MCF 10A (cell line): ENCODE measurements at regions of chr6 and their contacts with region 1.

Region 1: GRCh38 chr6:63685446-63686379 is 50.1 kb downstream of the PHF3 start:
- DNase-seq: no peak
- H3K4me3 Mint-ChIP-seq: no peak overlapping the region
- H3K27ac Mint-ChIP-seq: no peak overlapping the region
- H3K4me1 Mint-ChIP-seq: no peaks in the 10 kb centered on the region
- H3K27me3 Mint-ChIP-seq: no peaks in the 10 kb centered on the region
- CTCF ChIP-seq: no peak

Region 2: DNA sequence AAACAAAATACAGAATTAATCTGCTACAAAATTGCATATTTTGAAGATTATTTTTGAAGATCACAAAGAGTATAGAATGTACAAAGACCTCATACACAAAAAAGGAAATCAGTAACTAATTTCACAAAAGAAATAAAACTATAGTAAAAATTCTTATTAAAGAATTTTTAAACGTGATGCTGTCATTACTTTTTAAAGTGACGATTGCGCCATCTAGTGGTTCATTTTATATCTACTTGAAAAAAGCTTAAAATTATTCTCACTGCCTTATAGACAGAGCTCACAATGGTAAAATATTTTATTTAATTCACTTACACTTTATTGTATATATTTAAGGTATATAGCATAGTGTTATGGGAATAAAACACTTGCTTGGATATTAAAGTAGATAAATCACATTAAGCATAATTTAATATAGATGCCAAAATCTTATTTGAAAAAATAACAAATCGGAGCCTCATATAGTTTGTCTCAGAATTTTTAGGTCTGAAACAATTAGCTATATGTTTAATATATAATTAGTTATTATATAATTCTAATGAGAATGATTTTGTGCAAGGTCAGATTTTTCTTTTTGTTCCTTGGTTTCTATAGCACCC is 78.7 kb after region 1 on chr6:
- CTCF ChIA-PET with region 1: interaction called, 4 read pairs
- POLR2A ChIA-PET with region 1: no interaction called
- intact Hi-C with region 1: loop called (anchors 2 kb)
- DNase-seq: peak; percentile 62
- H3K4me3 Mint-ChIP-seq: no peak overlapping the region
- H3K27ac Mint-ChIP-seq: no peak overlapping the region
- H3K4me1 Mint-ChIP-seq: no peaks in the 10 kb centered on the region
- H3K27me3 Mint-ChIP-seq: no peaks in the 10 kb centered on the region
- CTCF ChIP-seq: peak; percentile 51